Activated CD8-positive, alpha-beta memory T cell treated with anti-CD3 and anti-CD28 coated beads, Interleukin-2, amount 10 ng/mL, durations not matched to agents 7 days and 5 days (primary cell): ENCODE measurements at regions of chr6 and their contacts with region 1.

Region 1: DNA sequence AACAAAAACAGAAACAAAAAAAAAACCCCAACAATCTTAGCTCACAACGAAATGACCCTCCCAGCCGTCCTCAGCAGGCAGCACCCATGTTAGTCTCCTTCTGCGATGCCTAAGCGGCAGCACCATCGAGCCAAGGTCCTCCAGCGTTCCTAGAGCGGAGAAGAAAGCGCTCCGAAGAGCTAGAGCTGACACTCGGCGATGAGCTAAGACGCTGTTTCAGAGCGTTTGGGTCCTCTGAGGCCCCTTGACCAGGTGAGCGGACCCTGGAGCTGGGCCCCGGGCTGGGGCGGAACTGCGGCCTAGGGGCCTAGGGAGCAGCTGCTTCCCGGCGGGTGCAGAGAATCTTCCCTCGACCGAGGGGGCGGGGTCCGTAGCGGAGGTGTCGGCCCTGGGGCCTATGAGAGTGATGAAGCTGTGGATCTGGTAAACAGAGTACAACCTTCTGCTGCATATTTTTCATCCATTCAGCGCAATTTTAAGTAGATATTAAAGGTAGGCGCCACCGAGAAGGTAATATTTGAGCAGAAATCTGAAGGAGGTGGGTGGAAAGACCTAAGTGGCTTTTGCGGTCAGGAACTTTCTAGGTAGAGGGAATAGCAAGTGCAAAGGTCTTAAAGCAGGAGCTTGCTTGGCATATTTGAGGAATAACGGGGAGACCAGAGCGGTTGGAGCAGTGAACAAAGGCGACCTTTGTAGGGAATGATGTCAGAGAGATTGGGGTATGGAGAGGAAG is at the start of gene ZSCAN26:
- DNase-seq: peak; percentile 93
- ATAC-seq: peak; percentile 97
- H3K4me3 Mint-ChIP-seq: no peak within 1 kb of the TSS
- H3K27ac Mint-ChIP-seq: no peak within 1 kb of the TSS
- H3K4me1 Mint-ChIP-seq: peaks cover 22% of the 10 kb centered on the region
- H3K27me3 Mint-ChIP-seq: peaks cover 3% of the 10 kb centered on the region
- total RNA-seq, gene ZSCAN26: 7.8 to 11.7 TPM

Region 2: GRCh38 chr6:28252009-28252975 is 14.8 kb before region 1 on chr6 and contains the start of gene ZKSCAN4:
- CTCF ChIA-PET with region 1: interaction called, 21 read pairs
- DNase-seq: peak; percentile 83
- ATAC-seq: peak; percentile 85
- H3K4me3 Mint-ChIP-seq: peak within 1 kb of the TSS; percentile 96
- H3K27ac Mint-ChIP-seq: peak within 1 kb of the TSS; percentile 86
- H3K4me1 Mint-ChIP-seq: peaks cover 26% of the 10 kb centered on the region
- H3K27me3 Mint-ChIP-seq: no peaks in the 10 kb centered on the region
- total RNA-seq, gene ZKSCAN4: 5.7 to 6.1 TPM

Region 3: GRCh38 chr6:28281288-28282064 is 14.3 kb after region 1 on chr6 and contains the start of gene PGBD1:
- CTCF ChIA-PET with region 1: interaction called, 12 read pairs
- DNase-seq: peak; percentile 77
- ATAC-seq: peak; percentile 98
- H3K4me3 Mint-ChIP-seq: peak within 1 kb of the TSS; percentile 81
- H3K27ac Mint-ChIP-seq: no peak within 1 kb of the TSS
- H3K4me1 Mint-ChIP-seq: peaks cover 14% of the 10 kb centered on the region
- H3K27me3 Mint-ChIP-seq: peaks cover 5% of the 10 kb centered on the region
- total RNA-seq, gene PGBD1: 3.9 to 4.2 TPM